H1 (cell line): ENCODE measurements at regions of chr4 and their contacts with region 1.

Region 1: GRCh38 chr4:123116412-123116811 is 194.0 kb upstream of the NUDT6 start:
- DNase-seq: no peak
- H3K4me3 ChIP-seq: no peak overlapping the region
- H3K27ac ChIP-seq: no peak overlapping the region
- H3K4me1 ChIP-seq: no peaks in the 10 kb centered on the region
- H3K27me3 ChIP-seq: no peaks in the 10 kb centered on the region
- CTCF ChIP-seq: no peak
- EP300 ChIP-seq: no peak
- POLR2A ChIP-seq: no peak
- RAD21 ChIP-seq: no peak

Region 2: DNA sequence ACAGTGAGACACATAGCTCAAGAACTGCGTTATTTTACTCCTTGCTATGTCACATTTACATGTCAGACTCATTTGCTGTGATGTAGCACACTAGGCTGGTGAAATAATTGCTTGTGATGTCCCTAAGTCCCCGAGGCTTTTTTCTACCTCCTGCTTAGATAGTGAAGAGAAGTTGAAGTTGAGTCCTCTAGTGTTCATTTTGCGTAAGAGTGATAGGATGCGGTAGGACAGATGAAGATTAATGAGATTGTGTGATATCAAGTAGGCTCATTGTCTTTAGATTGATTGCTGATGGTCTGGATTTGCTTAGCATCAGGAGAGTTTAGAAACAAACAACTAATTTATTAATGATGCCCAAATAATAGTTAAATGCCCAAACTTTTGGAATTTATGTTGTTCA is 20.4 kb before region 1 on chr4:
- CTCF ChIA-PET with region 1: interaction called, 11 read pairs
- POLR2A ChIA-PET with region 1: no interaction called
- DNase-seq: no peak
- H3K4me3 ChIP-seq: no peak overlapping the region
- H3K27ac ChIP-seq: no peak overlapping the region
- H3K4me1 ChIP-seq: no peaks in the 10 kb centered on the region
- H3K27me3 ChIP-seq: no peaks in the 10 kb centered on the region
- CTCF ChIP-seq: peak in 2 of 3 experiments; percentile 33 to 84; a peak in 2 of 4 replicates
- EP300 ChIP-seq: no peak
- POLR2A ChIP-seq: no peak
- RAD21 ChIP-seq: peak; percentile 57 to 62

Region 3: GRCh38 chr4:123127218-123127617 is 10.8 kb after region 1 on chr4:
- CTCF ChIA-PET with region 1: interaction called, 13 read pairs
- POLR2A ChIA-PET with region 1: no interaction called
- DNase-seq: no peak
- H3K4me3 ChIP-seq: no peak overlapping the region
- H3K27ac ChIP-seq: no peak overlapping the region
- H3K4me1 ChIP-seq: no peaks in the 10 kb centered on the region
- H3K27me3 ChIP-seq: no peaks in the 10 kb centered on the region
- CTCF ChIP-seq: no peak
- EP300 ChIP-seq: no peak
- POLR2A ChIP-seq: no peak
- RAD21 ChIP-seq: peak in 1 of 2 experiments; percentile 33; a peak in 3 of 4 replicates